ENCODE measurements at regions of chr10 and their contacts with region 1.

Region 1: DNA sequence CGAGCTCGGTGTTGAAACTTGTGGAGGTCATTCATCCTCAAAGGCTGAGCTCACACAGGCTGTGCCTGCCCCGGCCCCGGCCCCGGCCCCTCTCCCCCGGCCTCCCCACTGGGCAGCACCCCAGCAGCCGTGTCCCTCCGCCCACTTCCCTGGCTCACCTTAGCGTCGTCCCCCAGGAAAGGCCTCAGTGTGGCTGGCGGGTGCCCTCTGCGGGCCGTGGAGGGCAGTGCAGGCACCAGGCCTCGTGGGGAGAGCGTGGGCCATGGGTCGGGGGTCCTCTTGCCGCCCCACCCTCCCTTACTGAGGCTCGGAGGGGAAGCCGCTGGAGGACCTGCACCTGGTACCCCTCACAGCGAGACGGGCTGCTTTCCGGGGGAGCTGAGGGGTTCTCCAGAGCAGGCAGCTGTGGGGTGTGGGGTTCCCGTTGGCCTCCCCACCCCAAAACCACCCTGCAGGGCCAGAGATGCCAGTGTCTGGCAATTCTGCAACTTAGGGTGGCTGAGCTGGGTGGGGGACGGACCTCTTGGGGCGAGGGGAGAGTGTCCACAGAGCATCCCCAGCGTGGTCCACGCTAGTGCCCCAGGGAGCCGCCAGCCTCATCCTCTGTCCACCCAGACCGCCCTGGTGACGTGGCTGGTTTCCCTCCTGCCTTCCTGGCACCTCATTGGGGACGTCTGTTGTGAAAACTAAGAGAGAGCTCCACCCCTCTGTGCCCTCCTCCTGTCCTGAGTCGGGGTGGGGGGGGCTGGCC is 44.2 kb upstream of the DPYSL4 start:
- DNase-seq: peak; percentile 95
- H3K4me3 ChIP-seq: no peak overlapping the region
- H3K27ac ChIP-seq: no peak overlapping the region
- H3K4me1 ChIP-seq: no peaks in the 10 kb centered on the region; a peak in 1 of 4 replicates
- H3K27me3 ChIP-seq: no peaks in the 10 kb centered on the region
- CTCF ChIP-seq: peak; percentile 45
- EP300 ChIP-seq: no peak
- RAD21 ChIP-seq: peak; percentile 74

Region 2: GRCh38 chr10:130570074-130570473 is 1572.5 kb before region 1 on chr10:
- CTCF ChIA-PET with region 1: no interaction called
- POLR2A ChIA-PET with region 1: no interaction called
- DNase-seq: no peak
- H3K4me3 ChIP-seq: no peak overlapping the region
- H3K27ac ChIP-seq: no peak overlapping the region
- H3K4me1 ChIP-seq: no peaks in the 10 kb centered on the region
- H3K27me3 ChIP-seq: no peaks in the 10 kb centered on the region
- CTCF ChIP-seq: no peak
- EP300 ChIP-seq: no peak
- RAD21 ChIP-seq: no peak

Region 3: DNA sequence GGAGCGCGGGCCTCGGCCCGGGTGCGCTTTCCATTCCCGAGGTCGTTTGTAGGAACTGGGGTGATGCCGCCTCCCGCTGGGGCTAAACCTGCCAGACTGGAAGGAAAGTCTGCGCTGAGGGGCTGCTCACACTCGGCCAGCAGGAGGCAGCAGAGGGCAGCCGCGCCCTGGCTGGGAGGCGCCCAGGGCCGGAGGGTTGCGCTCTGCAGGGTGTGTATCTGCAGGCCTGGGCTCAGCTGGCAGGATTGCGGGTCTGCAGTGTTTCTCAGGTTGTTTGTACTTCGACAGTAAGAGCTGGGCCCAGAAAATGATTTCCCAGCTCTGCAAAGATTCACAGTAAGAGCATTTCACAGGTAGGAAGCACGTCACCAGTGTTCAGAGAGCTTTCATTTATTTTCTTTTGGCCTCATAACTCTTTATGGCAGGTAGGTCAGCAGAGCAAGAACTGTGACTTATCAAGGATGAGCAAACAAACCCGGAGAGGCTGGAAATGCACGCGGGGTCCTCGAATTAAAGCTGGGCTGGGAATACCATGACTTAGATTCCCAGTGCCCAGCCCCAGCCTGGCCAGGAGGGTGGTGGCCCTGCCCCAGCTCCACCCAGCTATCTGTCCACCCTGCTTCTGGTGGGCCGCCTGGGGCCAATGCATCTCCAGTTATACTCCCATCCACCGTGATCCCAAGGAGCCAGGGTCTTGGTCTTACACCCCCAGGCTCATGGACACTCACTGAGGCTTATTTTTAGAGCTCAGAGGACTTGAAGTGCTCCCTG is 257.0 kb before region 1 on chr10:
- CTCF ChIA-PET with region 1: interaction called, 21 read pairs
- POLR2A ChIA-PET with region 1: no interaction called
- DNase-seq: peak; percentile 93
- H3K4me3 ChIP-seq: no peak overlapping the region; a peak in 1 of 4 replicates
- H3K27ac ChIP-seq: no peak overlapping the region
- H3K4me1 ChIP-seq: no peaks in the 10 kb centered on the region; a peak in 1 of 4 replicates
- H3K27me3 ChIP-seq: no peaks in the 10 kb centered on the region
- CTCF ChIP-seq: peak; percentile 81
- EP300 ChIP-seq: no peak
- RAD21 ChIP-seq: peak; percentile 89

Region 4: DNA sequence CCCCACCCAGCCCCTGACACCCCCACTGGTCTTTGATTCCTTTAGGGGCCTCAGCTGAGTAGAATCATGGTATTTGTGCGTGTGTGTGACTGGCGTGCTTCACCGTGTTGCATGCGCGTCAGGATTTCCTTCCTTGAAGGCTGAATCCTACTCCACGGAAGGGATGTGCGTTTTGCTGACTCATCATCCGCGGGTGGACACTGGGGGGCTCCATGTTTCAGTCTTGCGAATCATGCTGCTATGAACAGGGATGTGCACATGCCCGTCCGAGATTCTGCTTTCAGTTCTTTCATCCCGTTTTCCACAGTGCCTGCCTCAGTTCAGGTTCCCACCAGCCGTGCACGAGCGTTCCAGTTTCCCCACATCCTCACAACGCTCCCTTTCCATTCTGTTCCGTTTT is 97.8 kb before region 1 on chr10:
- CTCF ChIA-PET with region 1: interaction called, 10 read pairs
- POLR2A ChIA-PET with region 1: no interaction called
- DNase-seq: no peak
- H3K4me3 ChIP-seq: no peak overlapping the region
- H3K27ac ChIP-seq: no peak overlapping the region
- H3K4me1 ChIP-seq: no peaks in the 10 kb centered on the region
- H3K27me3 ChIP-seq: no peaks in the 10 kb centered on the region
- CTCF ChIP-seq: no peak
- EP300 ChIP-seq: no peak
- RAD21 ChIP-seq: no peak

Region 5: DNA sequence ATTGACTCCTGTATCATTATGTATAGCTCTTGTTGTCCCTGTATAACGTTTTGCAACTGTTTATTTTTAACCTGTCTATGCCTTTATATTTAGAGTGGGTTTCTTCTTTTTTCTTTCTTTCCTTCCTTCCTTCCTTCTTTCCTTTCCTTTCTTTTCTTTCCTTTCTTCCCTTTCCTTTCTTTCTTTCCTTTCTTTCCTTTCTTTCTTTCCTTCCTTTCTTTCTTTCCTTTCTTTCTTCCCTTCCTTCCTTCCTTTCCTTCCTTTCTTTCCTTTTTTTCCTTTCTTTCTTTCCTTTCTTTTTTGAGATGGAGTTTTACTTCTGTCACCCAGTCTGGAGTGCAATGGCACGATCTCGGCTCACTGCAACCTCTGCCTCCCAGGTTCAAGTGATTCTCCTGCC is 70.9 kb before region 1 on chr10:
- CTCF ChIA-PET with region 1: no interaction called
- POLR2A ChIA-PET with region 1: no interaction called
- DNase-seq: no peak
- H3K4me3 ChIP-seq: no peak overlapping the region
- H3K27ac ChIP-seq: no peak overlapping the region
- H3K4me1 ChIP-seq: no peaks in the 10 kb centered on the region
- H3K27me3 ChIP-seq: no peaks in the 10 kb centered on the region
- CTCF ChIP-seq: no peak
- EP300 ChIP-seq: no peak
- RAD21 ChIP-seq: no peak

Region 6: DNA sequence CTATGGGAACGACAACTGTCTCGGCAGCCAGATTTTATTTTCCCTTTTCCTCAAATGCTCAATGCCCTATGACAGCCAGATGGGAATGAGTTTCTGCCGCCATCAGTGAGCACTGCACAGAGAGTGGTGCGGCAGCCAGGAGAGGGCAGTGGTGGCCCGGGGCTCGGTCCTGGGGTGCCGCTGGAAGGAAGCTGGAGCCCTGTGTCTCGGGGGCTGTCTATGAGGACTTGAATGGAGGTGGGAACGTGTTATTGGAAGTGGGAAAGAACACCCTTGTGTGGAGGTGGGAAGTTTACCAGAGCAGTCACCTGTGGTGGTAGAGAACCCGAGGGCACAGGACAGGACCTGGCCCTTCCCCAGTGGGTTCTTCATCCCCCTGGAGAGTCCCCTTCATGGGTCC is 41.1 kb before region 1 on chr10:
- CTCF ChIA-PET with region 1: interaction called, 27 read pairs
- POLR2A ChIA-PET with region 1: no interaction called
- DNase-seq: peak; percentile 61
- H3K4me3 ChIP-seq: no peak overlapping the region
- H3K27ac ChIP-seq: no peak overlapping the region
- H3K4me1 ChIP-seq: no peaks in the 10 kb centered on the region
- H3K27me3 ChIP-seq: no peaks in the 10 kb centered on the region
- CTCF ChIP-seq: no peak
- EP300 ChIP-seq: no peak
- RAD21 ChIP-seq: peak; percentile 24; the same call in 1 of the 2 replicates

Region 7: DNA sequence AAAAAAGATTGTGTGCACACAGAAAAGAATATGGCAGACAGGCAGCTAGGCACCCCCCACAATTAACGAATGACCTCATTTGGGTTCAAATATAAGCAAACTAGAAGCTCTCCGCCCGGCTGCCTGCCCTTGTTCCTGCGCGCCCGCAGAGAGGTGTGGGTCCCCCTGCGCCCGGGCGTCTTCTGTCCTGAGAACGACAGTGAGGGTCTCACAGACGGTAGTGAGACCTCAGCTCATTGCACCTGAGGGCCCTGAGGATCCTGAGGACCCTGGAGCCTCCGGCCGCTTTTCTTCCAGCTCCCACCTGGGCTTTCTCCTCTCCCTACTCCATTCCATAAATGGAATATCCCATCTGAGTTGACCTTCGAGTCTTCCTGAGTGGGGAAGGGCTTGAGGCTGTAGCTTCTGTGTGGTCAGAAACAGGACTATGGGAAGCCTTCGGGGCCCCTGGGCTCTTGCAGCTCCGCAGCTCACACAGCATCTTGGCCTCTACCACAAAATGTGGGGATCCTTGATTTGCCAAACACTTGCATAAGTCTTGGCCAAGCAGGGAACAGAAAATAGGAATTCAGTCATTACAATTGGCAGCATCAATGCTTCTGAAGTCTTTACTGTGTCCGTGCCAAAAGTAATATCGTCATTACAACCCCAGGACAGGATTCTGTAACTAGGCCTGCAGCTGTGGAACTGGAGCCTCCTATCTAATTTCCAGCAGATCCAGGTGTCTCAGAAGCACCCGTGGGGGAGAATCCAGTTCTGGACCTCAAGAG is 33.1 kb before region 1 on chr10:
- CTCF ChIA-PET with region 1: interaction called, 16 read pairs
- POLR2A ChIA-PET with region 1: no interaction called
- DNase-seq: no peak
- H3K4me3 ChIP-seq: no peak overlapping the region
- H3K27ac ChIP-seq: no peak overlapping the region
- H3K4me1 ChIP-seq: no peaks in the 10 kb centered on the region
- H3K27me3 ChIP-seq: no peaks in the 10 kb centered on the region
- CTCF ChIP-seq: no peak
- EP300 ChIP-seq: no peak
- RAD21 ChIP-seq: no peak

Region 8: GRCh38 chr10:132193907-132194552 is 51.4 kb after region 1 on chr10:
- CTCF ChIA-PET with region 1: no interaction called
- POLR2A ChIA-PET with region 1: no interaction called
- DNase-seq: no peak
- H3K4me3 ChIP-seq: no peak overlapping the region
- H3K27ac ChIP-seq: no peak overlapping the region
- H3K4me1 ChIP-seq: peaks cover 0 to 14% of the 10 kb centered on the region in 2 experiments; a peak in 1 of 4 replicates
- H3K27me3 ChIP-seq: no peaks in the 10 kb centered on the region
- CTCF ChIP-seq: no peak
- EP300 ChIP-seq: no peak
- RAD21 ChIP-seq: no peak

Region 9: GRCh38 chr10:132353456-132354355 is 211.1 kb after region 1 on chr10:
- CTCF ChIA-PET with region 1: no interaction called
- POLR2A ChIA-PET with region 1: no interaction called
- DNase-seq: no peak
- H3K4me3 ChIP-seq: no peak overlapping the region
- H3K27ac ChIP-seq: no peak overlapping the region
- H3K4me1 ChIP-seq: no peaks in the 10 kb centered on the region
- H3K27me3 ChIP-seq: no peaks in the 10 kb centered on the region
- CTCF ChIP-seq: no peak
- EP300 ChIP-seq: no peak
- RAD21 ChIP-seq: no peak